HepG2 (cell line): ENCODE measurements at regions of chr20 and their contacts with region 1.

Region 1: DNA sequence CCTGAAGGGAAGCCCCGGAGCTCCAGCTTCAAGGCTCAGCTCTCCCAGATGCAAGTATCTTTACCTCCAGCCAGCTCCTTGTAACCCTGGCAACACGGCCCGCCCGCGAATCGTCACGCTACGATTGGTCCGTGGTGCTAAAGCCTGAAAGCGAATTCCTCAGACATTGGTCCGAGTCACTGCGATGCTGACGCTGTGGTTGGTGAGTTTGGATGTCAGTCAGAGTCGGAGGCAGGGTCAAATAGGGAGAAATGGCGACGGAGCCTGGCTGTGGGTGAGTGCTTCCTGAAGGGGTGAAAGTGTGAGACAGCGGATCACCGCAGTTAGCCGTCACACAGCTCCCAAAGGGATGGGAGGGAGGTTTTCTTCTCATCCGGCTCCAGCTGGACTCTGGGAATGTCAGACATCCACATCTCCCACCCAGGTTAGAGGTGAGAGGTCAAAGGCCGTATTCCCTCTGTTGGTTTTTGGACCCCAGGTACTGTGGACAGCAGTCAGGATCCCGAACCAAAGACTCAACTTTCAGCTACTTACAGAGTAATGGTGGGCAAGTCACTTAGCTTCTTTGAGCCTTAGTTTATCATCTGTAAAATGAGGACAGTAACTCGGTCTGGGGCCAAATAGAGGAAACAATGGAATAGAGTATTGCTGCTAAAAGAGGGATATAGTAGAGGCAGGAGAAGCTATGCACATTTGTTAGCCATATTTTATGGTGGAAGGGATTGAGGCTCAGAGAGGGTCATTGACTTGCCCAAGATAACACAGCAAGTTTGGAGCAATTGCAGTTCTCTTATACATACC is at the start of gene ZSWIM1:
- DNase-seq: peak; percentile 100
- ATAC-seq: peak; percentile 98
- H3K4me3 ChIP-seq: peak within 1 kb of the TSS; percentile 83 to 92 (median 89)
- H3K27ac ChIP-seq: peak within 1 kb of the TSS; percentile 75
- H3K4me1 ChIP-seq: peaks cover 22% of the 10 kb centered on the region
- H3K27me3 ChIP-seq: no peaks in the 10 kb centered on the region; a peak in 1 of 5 replicates
- CTCF ChIP-seq: no peak
- EP300 ChIP-seq: no peak; a peak in 1 of 4 replicates
- POLR2A ChIP-seq: peak; percentile 97 to 99
- RAD21 ChIP-seq: peak; percentile 34; the same call in 1 of the 2 replicates
- total RNA-seq, gene ZSWIM1: 11.7 and 16.5 TPM in 2 replicates

Region 2: GRCh38 chr20:45779011-45779915 is 101.9 kb before region 1 on chr20:
- CTCF ChIA-PET with region 1: no interaction called
- POLR2A ChIA-PET with region 1: no interaction called
- in situ Hi-C with region 1: no loop called
- intact Hi-C with region 1: no loop called
- DNase-seq: no peak
- ATAC-seq: no peak
- H3K4me3 ChIP-seq: no peak overlapping the region
- H3K27ac ChIP-seq: no peak overlapping the region
- H3K4me1 ChIP-seq: peaks cover 13% of the 10 kb centered on the region
- H3K27me3 ChIP-seq: peaks cover 2 to 15% of the 10 kb centered on the region in 2 experiments; a peak in 3 of 5 replicates
- CTCF ChIP-seq: no peak
- EP300 ChIP-seq: no peak
- POLR2A ChIP-seq: no peak
- RAD21 ChIP-seq: no peak

Region 3: GRCh38 chr20:45798935-45799642 is 82.1 kb before region 1 on chr20:
- CTCF ChIA-PET with region 1: no interaction called
- POLR2A ChIA-PET with region 1: no interaction called
- in situ Hi-C with region 1: no loop called
- intact Hi-C with region 1: loop called (anchors 10 kb)
- DNase-seq: peak; percentile 61
- ATAC-seq: peak; percentile 97
- H3K4me3 ChIP-seq: no peak overlapping the region
- H3K27ac ChIP-seq: no peak overlapping the region
- H3K4me1 ChIP-seq: no peaks in the 10 kb centered on the region
- H3K27me3 ChIP-seq: no peaks in the 10 kb centered on the region
- CTCF ChIP-seq: peak; percentile 94
- EP300 ChIP-seq: no peak
- POLR2A ChIP-seq: no peak; a peak in 1 of 4 replicates
- RAD21 ChIP-seq: peak; percentile 71

Region 4: GRCh38 chr20:45857114-45857881 is 23.9 kb before region 1 on chr20 and contains the starts of genes ACOT8 and ZSWIM3:
- CTCF ChIA-PET with region 1: no interaction called
- POLR2A ChIA-PET with region 1: interaction called, 85 read pairs
- in situ Hi-C with region 1: no loop called
- intact Hi-C with region 1: no loop called
- DNase-seq: peak; percentile 100
- ATAC-seq: peak; percentile 98
- H3K4me3 ChIP-seq: peak within 1 kb of the TSS; percentile 78 to 91 (median 83)
- H3K27ac ChIP-seq: peak within 1 kb of the TSS; percentile 49
- H3K4me1 ChIP-seq: peaks cover 55% of the 10 kb centered on the region
- H3K27me3 ChIP-seq: no peaks in the 10 kb centered on the region; a peak in 1 of 5 replicates
- CTCF ChIP-seq: 0 out of 2 replicates have a peak, but pooled peaks have one; percentile 19
- EP300 ChIP-seq: peak in 1 of 2 experiments; percentile 41; a peak in 1 of 4 replicates
- POLR2A ChIP-seq: peak; percentile 84 to 97
- RAD21 ChIP-seq: peak; percentile 62
- total RNA-seq, gene ACOT8: 31.4 and 39.1 TPM in 2 replicates
- total RNA-seq, gene ZSWIM3: 5.8 and 7.3 TPM in 2 replicates

Region 5: DNA sequence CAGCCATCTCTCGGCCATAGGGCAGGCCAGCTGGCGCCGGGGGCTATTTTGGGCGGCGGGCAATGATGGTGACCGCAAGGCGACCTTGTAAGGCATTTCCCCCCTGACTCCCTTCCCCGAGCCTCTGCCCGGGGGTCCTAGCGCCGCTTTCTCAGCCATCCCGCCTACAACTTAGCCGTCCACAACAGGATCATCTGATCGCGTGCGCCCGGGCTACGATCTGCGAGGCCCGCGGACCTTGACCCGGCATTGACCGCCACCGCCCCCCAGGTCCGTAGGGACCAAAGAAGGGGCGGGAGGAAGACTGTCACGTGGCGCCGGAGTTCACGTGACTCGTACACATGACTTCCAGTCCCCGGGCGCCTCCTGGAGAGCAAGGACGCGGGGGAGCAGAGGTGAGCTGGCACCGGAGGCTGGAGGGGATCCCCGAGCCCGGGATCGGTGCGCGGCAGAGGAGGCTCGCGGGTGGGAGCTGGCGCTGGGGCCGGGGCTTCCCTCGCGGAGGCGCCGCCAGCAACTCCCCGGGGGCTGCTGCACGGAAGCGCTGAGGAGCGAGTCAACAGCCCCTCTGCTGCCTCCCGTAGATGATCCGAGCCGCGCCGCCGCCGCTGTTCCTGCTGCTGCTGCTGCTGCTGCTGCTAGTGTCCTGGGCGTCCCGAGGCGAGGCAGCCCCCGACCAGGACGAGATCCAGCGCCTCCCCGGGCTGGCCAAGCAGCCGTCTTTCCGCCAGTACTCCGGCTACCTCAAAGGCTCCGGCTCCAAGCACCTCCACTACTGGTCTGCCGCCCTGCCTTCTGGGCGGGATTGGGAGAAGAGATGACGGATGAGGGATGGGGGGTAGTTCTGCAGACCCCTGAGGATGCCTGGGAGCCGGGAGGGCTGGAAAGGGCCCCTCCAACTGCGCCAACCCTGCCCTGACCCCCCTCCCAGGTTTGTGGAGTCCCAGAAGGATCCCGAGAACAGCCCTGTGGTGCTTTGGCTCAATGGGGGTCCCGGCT is 10.1 kb after region 1 on chr20 and contains the starts of genes CTSA and NEURL2:
- CTCF ChIA-PET with region 1: no interaction called
- POLR2A ChIA-PET with region 1: interaction called, 129 read pairs
- in situ Hi-C with region 1: no loop called
- intact Hi-C with region 1: loop called (anchors 1 kb)
- DNase-seq: peak; percentile 98
- ATAC-seq: peak; percentile 80
- H3K4me3 ChIP-seq: peak within 1 kb of the TSS; percentile 86 to 98 (median 96)
- H3K27ac ChIP-seq: peak within 1 kb of the TSS; percentile 87
- H3K4me1 ChIP-seq: peaks cover 43% of the 10 kb centered on the region
- H3K27me3 ChIP-seq: no peaks in the 10 kb centered on the region
- CTCF ChIP-seq: peak; percentile 79
- EP300 ChIP-seq: peak; percentile 87 to 97
- POLR2A ChIP-seq: peak; percentile 90 to 94
- RAD21 ChIP-seq: peak; percentile 66
- total RNA-seq, gene CTSA: 63.8 and 202 TPM in 2 replicates
- total RNA-seq, gene NEURL2: 4.1 and 9.7 TPM in 2 replicates

Region 6: DNA sequence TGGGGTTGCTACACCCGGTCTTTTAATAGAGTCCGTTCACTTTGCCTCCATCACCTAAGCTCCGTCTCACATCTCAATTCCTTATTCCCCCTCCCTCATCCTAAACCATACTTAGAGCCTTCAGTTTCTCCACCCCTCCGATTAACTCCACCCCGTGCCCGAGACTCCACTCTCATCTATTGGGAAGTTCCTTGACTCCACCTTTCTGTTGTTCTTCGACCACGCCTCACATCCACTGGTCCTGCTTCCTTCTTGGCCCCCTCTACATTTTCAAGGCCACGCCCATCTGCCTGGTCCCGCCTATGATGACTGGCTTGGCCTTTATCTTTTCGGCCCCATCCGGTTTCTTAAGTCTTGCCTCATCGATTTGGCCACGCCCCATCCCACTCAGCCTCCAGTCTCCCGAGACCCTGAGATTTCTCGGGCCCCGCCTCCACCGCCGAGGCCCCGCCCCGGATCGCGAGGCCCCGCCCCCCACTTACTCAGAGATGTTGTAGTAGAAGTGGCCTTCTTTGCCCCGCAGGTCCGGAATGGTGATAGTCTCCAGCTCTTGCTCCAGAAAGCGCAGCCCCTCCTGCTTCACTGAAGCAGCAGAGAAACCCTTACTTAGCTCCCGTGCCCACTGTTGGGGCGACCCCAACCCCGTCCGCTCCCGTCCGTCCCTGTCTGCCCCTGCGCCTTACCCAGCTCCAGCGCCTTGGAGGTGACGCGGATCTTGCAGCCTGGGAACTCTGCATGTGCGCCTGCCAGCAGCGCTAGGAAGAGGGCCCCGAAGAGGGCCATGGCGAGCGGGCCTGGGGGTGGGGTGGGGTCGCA is 29.7 kb after region 1 on chr20:
- CTCF ChIA-PET with region 1: no interaction called
- POLR2A ChIA-PET with region 1: interaction called, 27 read pairs
- in situ Hi-C with region 1: no loop called
- intact Hi-C with region 1: no loop called
- DNase-seq: no peak
- ATAC-seq: no peak
- H3K4me3 ChIP-seq: peak overlapping the region in 1 of 3 experiments; percentile 66; a peak in 1 of 6 replicates
- H3K27ac ChIP-seq: no peak overlapping the region
- H3K4me1 ChIP-seq: peaks cover 56% of the 10 kb centered on the region
- H3K27me3 ChIP-seq: peaks cover 0 to under 1% of the 10 kb centered on the region in 2 experiments; a peak in 2 of 5 replicates
- CTCF ChIP-seq: no peak
- EP300 ChIP-seq: no peak
- POLR2A ChIP-seq: no peak
- RAD21 ChIP-seq: no peak

Region 7: GRCh38 chr20:45934586-45935415 is 53.6 kb after region 1 on chr20 and contains the start of gene PCIF1:
- CTCF ChIA-PET with region 1: no interaction called
- POLR2A ChIA-PET with region 1: interaction called, 78 read pairs
- in situ Hi-C with region 1: no loop called
- intact Hi-C with region 1: no loop called
- DNase-seq: peak; percentile 98
- ATAC-seq: peak; percentile 72
- H3K4me3 ChIP-seq: peak within 1 kb of the TSS; percentile 92 to 97 (median 95)
- H3K27ac ChIP-seq: peak within 1 kb of the TSS; percentile 97
- H3K4me1 ChIP-seq: peaks cover 54% of the 10 kb centered on the region
- H3K27me3 ChIP-seq: no peaks in the 10 kb centered on the region; a peak in 1 of 5 replicates
- CTCF ChIP-seq: no peak
- EP300 ChIP-seq: peak in 1 of 2 experiments; percentile 23; a peak in 3 of 4 replicates
- POLR2A ChIP-seq: peak; percentile 64 to 98
- RAD21 ChIP-seq: peak; percentile 90
- total RNA-seq, gene PCIF1: 18.5 and 20.9 TPM in 2 replicates

Region 8: GRCh38 chr20:45971675-45972499 is 90.7 kb after region 1 on chr20 and contains the start of gene ZNF335:
- CTCF ChIA-PET with region 1: no interaction called
- POLR2A ChIA-PET with region 1: interaction called, 18 read pairs
- in situ Hi-C with region 1: no loop called
- intact Hi-C with region 1: no loop called
- DNase-seq: peak; percentile 96
- ATAC-seq: peak; percentile 82
- H3K4me3 ChIP-seq: peak within 1 kb of the TSS; percentile 82 to 97 (median 96)
- H3K27ac ChIP-seq: peak within 1 kb of the TSS; percentile 98
- H3K4me1 ChIP-seq: peaks cover 26% of the 10 kb centered on the region
- H3K27me3 ChIP-seq: peaks cover 0 to 7% of the 10 kb centered on the region in 2 experiments; a peak in 1 of 5 replicates
- CTCF ChIP-seq: peak; percentile 60
- EP300 ChIP-seq: peak in 1 of 2 experiments; percentile 39; a peak in 3 of 4 replicates
- POLR2A ChIP-seq: peak; percentile 65 to 95; a peak in 3 of 4 replicates
- RAD21 ChIP-seq: peak; percentile 44
- total RNA-seq, gene ZNF335: 6.0 and 13.7 TPM in 2 replicates